Breast epithelium (tissue), 4 donors: ENCODE measurements at regions of chr7 and their contacts with region 1.

Region 1: GRCh38 chr7:55409482-55410225 is 44.5 kb downstream of the LANCL2 start:
- DNase-seq: no peak
- H3K4me3 ChIP-seq: no peak overlapping the region
- H3K27ac ChIP-seq: no peak overlapping the region
- H3K4me1 ChIP-seq: no peaks in the 10 kb centered on the region
- H3K27me3 ChIP-seq: no peaks in the 10 kb centered on the region
- CTCF ChIP-seq: no peak
- POLR2A ChIP-seq: no peak

Region 2: GRCh38 chr7:55288070-55288824 is 121.4 kb before region 1 on chr7:
- intact Hi-C with region 1: loop called (anchors 5 kb)
- DNase-seq: no peak
- H3K4me3 ChIP-seq: no peak overlapping the region
- H3K27ac ChIP-seq: no peak overlapping the region
- H3K4me1 ChIP-seq: no peaks in the 10 kb centered on the region
- H3K27me3 ChIP-seq: no peaks in the 10 kb centered on the region
- CTCF ChIP-seq: no peak
- POLR2A ChIP-seq: no peak

Region 3: GRCh38 chr7:56218510-56218909 is 808.9 kb after region 1 on chr7:
- intact Hi-C with region 1: no loop called
- DNase-seq: no peak
- H3K4me3 ChIP-seq: no peak overlapping the region
- H3K27ac ChIP-seq: no peak overlapping the region
- H3K4me1 ChIP-seq: no peaks in the 10 kb centered on the region
- H3K27me3 ChIP-seq: no peaks in the 10 kb centered on the region
- CTCF ChIP-seq: no peak
- POLR2A ChIP-seq: no peak